Activated CD4-positive, alpha-beta T cell treated with anti-CD3 and anti-CD28 coated beads for 36 hours (primary cell): ENCODE measurements at regions of chr9 and their contacts with region 1.

Region 1: GRCh38 chr9:110152704-110153374 is 55.1 kb downstream of the C9orf152 start:
- DNase-seq: no peak
- ATAC-seq: no peak
- H3K4me3 Mint-ChIP-seq: no peak overlapping the region
- H3K27ac Mint-ChIP-seq: no peak overlapping the region
- H3K4me1 Mint-ChIP-seq: peaks cover 68% of the 10 kb centered on the region
- H3K27me3 Mint-ChIP-seq: no peaks in the 10 kb centered on the region

Region 2: GRCh38 chr9:109542906-109543305 is 609.9 kb before region 1 on chr9:
- CTCF ChIA-PET with region 1: no interaction called
- POLR2A ChIA-PET with region 1: no interaction called
- intact Hi-C with region 1: no loop called
- DNase-seq: no peak
- ATAC-seq: no peak
- H3K4me3 Mint-ChIP-seq: no peak overlapping the region
- H3K27ac Mint-ChIP-seq: no peak overlapping the region
- H3K4me1 Mint-ChIP-seq: no peaks in the 10 kb centered on the region
- H3K27me3 Mint-ChIP-seq: peaks cover 8% of the 10 kb centered on the region

Region 3: GRCh38 chr9:109574068-109574882 is 578.6 kb before region 1 on chr9:
- CTCF ChIA-PET with region 1: interaction called, 5 read pairs
- POLR2A ChIA-PET with region 1: no interaction called
- intact Hi-C with region 1: loop called in 1 of 2 experiments (anchors 1 kb)
- DNase-seq: peak; percentile 29
- ATAC-seq: peak; percentile 63
- H3K4me3 Mint-ChIP-seq: no peak overlapping the region
- H3K27ac Mint-ChIP-seq: no peak overlapping the region
- H3K4me1 Mint-ChIP-seq: no peaks in the 10 kb centered on the region
- H3K27me3 Mint-ChIP-seq: peaks cover 2% of the 10 kb centered on the region

Region 4: DNA sequence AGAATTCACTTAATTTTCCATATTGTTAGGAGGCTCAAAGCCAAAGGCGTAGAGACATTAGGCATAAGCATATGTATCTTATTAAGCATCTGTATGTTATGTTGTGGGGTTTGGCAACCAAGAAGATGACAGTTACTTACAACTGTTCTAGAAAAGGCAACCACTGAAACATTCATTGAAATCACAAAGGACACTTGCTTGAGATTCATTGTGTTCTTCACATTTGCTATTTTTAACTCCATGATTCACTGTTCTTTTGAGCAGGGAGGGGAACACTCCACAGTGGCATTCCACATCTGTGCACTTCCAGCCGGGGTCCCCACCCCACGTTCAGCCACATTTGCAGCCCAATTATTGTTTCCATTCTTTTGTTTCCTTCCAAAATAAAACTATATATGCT is 265.8 kb before region 1 on chr9:
- CTCF ChIA-PET with region 1: interaction called, 9 read pairs
- POLR2A ChIA-PET with region 1: interaction called, 9 read pairs
- intact Hi-C with region 1: loop called in 1 of 2 experiments (anchors 1 kb)
- DNase-seq: no peak
- ATAC-seq: peak; percentile 48
- H3K4me3 Mint-ChIP-seq: no peak overlapping the region
- H3K27ac Mint-ChIP-seq: peak overlapping the region; percentile 88
- H3K4me1 Mint-ChIP-seq: peaks cover 45% of the 10 kb centered on the region
- H3K27me3 Mint-ChIP-seq: no peaks in the 10 kb centered on the region

Region 5: GRCh38 chr9:109903515-109904138 is 249.2 kb before region 1 on chr9:
- CTCF ChIA-PET with region 1: interaction called, 36 read pairs
- POLR2A ChIA-PET with region 1: interaction called, 11 read pairs
- intact Hi-C with region 1: loop called (anchors 1 kb)
- DNase-seq: peak; percentile 82
- ATAC-seq: peak; percentile 85
- H3K4me3 Mint-ChIP-seq: no peak overlapping the region
- H3K27ac Mint-ChIP-seq: peak overlapping the region; percentile 45
- H3K4me1 Mint-ChIP-seq: peaks cover 5% of the 10 kb centered on the region
- H3K27me3 Mint-ChIP-seq: peaks cover 4% of the 10 kb centered on the region

Region 6: DNA sequence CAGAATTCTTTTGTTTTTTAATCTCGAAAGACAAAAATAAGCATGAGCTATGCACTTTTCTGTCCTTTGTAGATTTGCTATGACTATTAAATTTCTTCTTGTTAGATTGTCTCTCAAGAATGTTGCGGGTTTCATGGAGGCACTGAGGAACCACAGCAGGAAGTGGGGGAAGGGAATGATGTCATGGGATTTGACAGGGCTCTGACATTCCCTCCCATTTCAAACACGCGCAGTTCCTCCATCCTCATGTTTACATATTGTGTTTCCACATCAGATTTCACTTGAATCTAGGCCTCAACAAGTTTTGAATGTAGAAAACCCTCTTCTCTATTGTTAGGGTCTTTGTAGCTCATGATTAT is 218.0 kb before region 1 on chr9:
- CTCF ChIA-PET with region 1: interaction called, 6 read pairs
- POLR2A ChIA-PET with region 1: interaction called, 3 read pairs
- intact Hi-C with region 1: loop called in 1 of 2 experiments (anchors 1 kb)
- DNase-seq: peak; percentile 30
- ATAC-seq: no peak
- H3K4me3 Mint-ChIP-seq: no peak overlapping the region
- H3K27ac Mint-ChIP-seq: peak overlapping the region; percentile 80
- H3K4me1 Mint-ChIP-seq: peaks cover 45% of the 10 kb centered on the region
- H3K27me3 Mint-ChIP-seq: peaks cover 3% of the 10 kb centered on the region

Region 7: DNA sequence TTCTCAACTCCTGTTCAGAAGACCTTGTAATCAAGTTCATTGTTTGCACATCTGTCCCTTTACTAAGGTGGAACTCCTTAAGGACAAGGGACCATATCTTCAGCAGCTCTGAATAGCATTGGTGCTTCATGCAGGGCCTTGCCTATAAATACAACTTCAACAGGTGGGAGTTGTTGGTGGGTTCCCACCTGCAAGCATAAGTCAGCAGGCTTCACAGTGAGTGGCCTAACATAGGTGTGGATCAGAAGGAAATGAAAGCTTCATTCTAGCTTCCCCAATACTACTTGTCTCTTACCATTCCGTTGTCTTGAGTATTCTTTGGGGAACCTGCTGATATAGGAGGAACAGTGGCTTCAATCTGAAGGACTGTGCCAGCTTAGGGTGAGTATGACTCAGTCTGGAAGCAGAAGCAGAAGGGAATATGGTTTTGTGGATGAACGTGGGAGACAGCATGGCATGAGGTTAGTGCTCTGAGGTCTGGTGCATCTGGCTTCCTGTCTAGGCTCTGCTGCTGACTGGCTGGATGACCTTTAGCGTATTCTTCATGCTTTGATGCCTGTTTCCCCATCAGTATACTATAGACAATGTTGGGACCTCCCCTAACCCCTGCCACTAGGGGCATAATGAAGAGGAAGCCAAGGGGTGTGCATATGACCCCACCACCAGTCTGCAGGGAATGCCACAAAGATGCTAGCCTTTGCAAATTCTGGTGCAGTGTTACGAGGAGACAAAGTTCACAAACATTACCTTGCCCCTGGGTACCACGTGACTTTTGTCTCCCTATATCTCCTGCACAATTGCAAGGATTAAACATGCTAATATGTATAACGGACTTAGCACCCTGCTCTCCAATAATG is 180.6 kb before region 1 on chr9:
- CTCF ChIA-PET with region 1: interaction called, 3 read pairs
- POLR2A ChIA-PET with region 1: interaction called, 3 read pairs
- intact Hi-C with region 1: loop called (anchors 1 kb)
- DNase-seq: peak; percentile 47
- ATAC-seq: peak; percentile 33
- H3K4me3 Mint-ChIP-seq: no peak overlapping the region
- H3K27ac Mint-ChIP-seq: peak overlapping the region; percentile 75
- H3K4me1 Mint-ChIP-seq: peaks cover 90% of the 10 kb centered on the region
- H3K27me3 Mint-ChIP-seq: no peaks in the 10 kb centered on the region

Region 8: DNA sequence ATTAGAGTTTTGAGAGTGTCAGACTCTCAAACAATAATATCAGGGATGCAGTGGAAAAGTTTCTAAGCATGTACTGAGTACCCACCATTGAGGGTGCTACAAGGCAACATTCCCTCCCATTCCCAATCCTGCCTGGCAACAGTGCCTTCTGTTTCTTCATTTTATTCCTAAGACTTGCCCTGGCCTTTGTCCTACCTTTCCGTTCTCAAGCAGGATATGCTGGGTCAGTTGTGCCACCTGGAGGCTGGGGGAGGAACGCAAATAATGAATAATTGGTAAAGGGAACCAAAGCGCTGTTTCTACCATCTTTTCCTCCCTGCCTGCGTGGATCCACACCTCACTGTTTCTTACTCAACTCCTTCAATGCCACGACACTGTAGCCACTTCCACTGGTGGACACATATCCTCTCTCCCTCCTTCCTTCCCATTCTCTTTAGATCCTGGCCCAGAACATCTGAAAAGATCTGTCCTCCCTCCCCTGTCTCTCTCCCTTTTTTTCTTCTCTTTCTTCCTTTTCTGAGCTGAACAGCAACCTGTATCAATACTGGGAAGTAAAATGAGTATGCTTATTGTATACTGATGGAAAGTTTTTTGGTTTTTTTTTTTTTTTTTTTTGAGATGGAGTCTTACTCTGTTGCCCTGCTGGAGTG is 94.4 kb before region 1 on chr9:
- CTCF ChIA-PET with region 1: interaction called, 4 read pairs
- POLR2A ChIA-PET with region 1: no interaction called
- intact Hi-C with region 1: loop called in 1 of 2 experiments (anchors 2 kb)
- DNase-seq: peak; percentile 71
- ATAC-seq: peak; percentile 66
- H3K4me3 Mint-ChIP-seq: no peak overlapping the region
- H3K27ac Mint-ChIP-seq: peak overlapping the region; percentile 48
- H3K4me1 Mint-ChIP-seq: peaks cover 9% of the 10 kb centered on the region
- H3K27me3 Mint-ChIP-seq: no peaks in the 10 kb centered on the region